GM13977 (cell line): ENCODE measurements at regions of chr3 and their contacts with region 1.

Region 1: DNA sequence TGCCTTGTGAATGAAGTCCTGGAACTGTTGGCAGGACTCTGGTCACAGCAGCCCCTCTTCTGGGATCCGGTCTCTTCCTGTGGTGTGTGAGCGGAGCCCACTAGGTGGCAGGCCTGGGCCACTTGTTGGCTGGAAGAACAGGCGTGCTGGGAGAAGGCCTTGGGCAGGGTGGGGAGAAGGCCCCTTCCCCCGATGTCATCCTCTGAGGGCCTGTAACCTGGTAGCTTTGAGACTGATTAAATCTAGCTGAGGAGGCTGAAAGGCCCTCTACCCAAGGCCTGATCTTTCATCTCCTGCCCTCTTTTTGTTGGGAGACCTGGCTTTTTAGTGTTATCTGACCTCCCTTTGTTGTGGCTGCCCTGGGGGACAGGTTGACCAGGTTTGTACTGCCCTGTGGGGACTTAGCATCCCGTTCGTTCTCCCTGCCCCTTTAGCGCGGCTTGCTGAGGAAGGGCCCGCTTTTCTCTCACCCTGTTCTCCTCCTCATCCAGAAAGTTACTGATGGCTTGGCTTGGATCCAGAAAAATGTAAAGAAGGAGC is 48.3 kb downstream of the CHCHD6 start:
- DNase-seq: peak; percentile 73
- CTCF ChIP-seq: peak; percentile 96

Region 2: GRCh38 chr3:126982471-126983175 is 230.2 kb after region 1 on chr3 and contains the start of gene PLXNA1:
- in situ Hi-C with region 1: loop called (anchors 25 kb)
- DNase-seq: peak; percentile 96
- CTCF ChIP-seq: peak; percentile 99